Activated naive CD4-positive, alpha-beta T cell treated with anti-CD3 and anti-CD28 coated beads for 36 hours (primary cell): ENCODE measurements at regions of chr5 and their contacts with region 1.

Region 1: GRCh38 chr5:129852747-129853352 is 51.4 kb upstream of the CHSY3 start:
- DNase-seq: peak; percentile 85
- H3K4me3 Mint-ChIP-seq: no peak overlapping the region
- H3K27ac Mint-ChIP-seq: no peak overlapping the region
- H3K4me1 Mint-ChIP-seq: no peaks in the 10 kb centered on the region
- H3K27me3 Mint-ChIP-seq: peaks cover 18% of the 10 kb centered on the region

Region 2: DNA sequence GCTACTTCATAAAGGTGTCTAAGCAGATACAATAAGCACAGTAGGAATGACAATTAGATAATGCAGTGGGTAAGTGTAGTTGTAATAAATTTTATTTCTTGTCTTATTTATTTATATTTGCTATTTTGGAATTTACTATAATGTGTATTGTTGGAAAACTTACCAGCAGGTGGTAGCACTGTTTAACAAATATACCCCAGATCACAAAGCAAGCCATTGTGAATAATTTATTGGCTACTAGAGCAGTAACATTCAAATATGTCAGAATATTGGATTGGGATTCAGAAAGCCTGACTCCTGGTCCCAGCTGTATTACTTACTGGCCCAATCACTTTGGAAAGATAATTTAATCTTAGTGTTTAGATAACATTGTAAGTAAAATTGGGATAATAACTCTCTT is 680.3 kb before region 1 on chr5:
- CTCF ChIA-PET with region 1: no interaction called
- intact Hi-C with region 1: loop called (anchors 2 kb)
- DNase-seq: no peak
- H3K4me3 Mint-ChIP-seq: no peak overlapping the region
- H3K27ac Mint-ChIP-seq: no peak overlapping the region
- H3K4me1 Mint-ChIP-seq: no peaks in the 10 kb centered on the region
- H3K27me3 Mint-ChIP-seq: no peaks in the 10 kb centered on the region

Region 3: DNA sequence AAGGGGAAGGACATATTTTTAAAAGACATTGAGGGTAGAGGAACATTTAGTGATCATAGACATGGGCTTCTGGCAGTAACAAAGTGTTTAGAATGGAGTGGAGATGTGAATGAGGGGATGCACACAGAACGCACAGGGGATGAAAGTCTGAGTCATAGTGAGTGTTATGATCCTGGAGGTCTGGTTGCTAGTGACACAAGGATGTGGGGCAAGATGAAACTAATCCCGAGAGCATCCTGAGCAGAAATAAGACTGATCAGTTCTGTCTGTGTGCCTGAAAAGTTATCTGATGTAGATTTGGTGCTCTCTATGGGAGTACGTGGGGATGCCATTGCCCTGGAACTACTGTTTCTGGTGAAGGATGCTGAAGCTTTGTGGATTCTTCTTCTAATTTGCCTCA is 192.5 kb after region 1 on chr5:
- CTCF ChIA-PET with region 1: no interaction called
- intact Hi-C with region 1: no loop called
- DNase-seq: no peak
- H3K4me3 Mint-ChIP-seq: no peak overlapping the region
- H3K27ac Mint-ChIP-seq: no peak overlapping the region
- H3K4me1 Mint-ChIP-seq: no peaks in the 10 kb centered on the region
- H3K27me3 Mint-ChIP-seq: peaks cover 3% of the 10 kb centered on the region

Region 4: GRCh38 chr5:130141659-130142320 is 288.9 kb after region 1 on chr5:
- CTCF ChIA-PET with region 1: interaction called, 3 read pairs
- intact Hi-C with region 1: loop called (anchors 5 kb)
- DNase-seq: peak; percentile 46
- H3K4me3 Mint-ChIP-seq: no peak overlapping the region
- H3K27ac Mint-ChIP-seq: no peak overlapping the region
- H3K4me1 Mint-ChIP-seq: no peaks in the 10 kb centered on the region
- H3K27me3 Mint-ChIP-seq: peaks cover 7% of the 10 kb centered on the region